Naive thymus-derived CD4-positive, alpha-beta T cell (primary cell): ENCODE measurements at regions of chr15 and their contacts with region 1.

Region 1: DNA sequence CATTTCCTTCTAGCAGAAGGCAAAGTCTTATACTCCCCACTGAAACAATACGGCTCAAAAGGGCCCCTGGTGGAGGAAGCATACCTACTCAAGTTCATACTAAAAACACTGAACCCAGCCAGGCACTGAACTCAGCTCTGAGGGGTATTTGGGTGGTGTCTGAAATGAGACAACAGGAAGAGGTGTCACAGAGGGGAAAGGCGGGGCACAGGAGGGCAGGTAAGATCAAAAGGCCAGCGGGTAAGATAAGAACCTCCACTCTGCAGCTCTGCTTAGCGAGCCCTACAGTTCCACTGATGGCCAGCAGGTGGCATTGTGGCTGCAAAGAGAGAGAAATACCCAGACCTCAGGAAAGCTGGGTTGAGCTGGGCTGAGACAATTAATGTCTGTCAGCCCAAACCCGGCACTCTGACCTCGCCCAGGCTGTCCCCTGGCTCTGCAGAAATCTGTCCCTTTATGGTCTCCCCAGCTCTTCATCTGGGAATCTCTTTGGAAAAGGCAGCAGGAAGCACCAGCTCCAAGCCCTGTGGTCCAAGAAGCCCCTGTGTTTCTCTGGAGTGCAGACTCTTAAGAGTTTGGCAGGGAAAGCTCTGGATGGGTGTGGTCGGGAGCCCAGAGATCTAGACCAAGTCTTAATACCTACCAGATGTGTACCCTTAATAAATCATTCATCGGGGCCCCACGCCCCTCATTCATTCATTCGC is 8.4 kb downstream of the MFGE8 start:
- DNase-seq: peak; percentile 79 to 99 (median 98)
- ATAC-seq: peak; percentile 99
- H3K4me3 ChIP-seq: no peak overlapping the region
- H3K4me3 Mint-ChIP-seq: peak overlapping the region; percentile 16 to 78 (median 54)
- H3K27ac ChIP-seq: peak overlapping the region; percentile 70
- H3K27ac Mint-ChIP-seq: peak overlapping the region; percentile 76 to 98 (median 94)
- H3K4me1 ChIP-seq: peaks cover 19 to 37% of the 10 kb centered on the region in 2 donors
- H3K4me1 Mint-ChIP-seq: peaks cover 23 to 65% (median 52%) of the 10 kb centered on the region in 7 donors
- H3K27me3 ChIP-seq: no peaks in the 10 kb centered on the region
- H3K27me3 Mint-ChIP-seq: no peaks in the 10 kb centered on the region

Region 2: DNA sequence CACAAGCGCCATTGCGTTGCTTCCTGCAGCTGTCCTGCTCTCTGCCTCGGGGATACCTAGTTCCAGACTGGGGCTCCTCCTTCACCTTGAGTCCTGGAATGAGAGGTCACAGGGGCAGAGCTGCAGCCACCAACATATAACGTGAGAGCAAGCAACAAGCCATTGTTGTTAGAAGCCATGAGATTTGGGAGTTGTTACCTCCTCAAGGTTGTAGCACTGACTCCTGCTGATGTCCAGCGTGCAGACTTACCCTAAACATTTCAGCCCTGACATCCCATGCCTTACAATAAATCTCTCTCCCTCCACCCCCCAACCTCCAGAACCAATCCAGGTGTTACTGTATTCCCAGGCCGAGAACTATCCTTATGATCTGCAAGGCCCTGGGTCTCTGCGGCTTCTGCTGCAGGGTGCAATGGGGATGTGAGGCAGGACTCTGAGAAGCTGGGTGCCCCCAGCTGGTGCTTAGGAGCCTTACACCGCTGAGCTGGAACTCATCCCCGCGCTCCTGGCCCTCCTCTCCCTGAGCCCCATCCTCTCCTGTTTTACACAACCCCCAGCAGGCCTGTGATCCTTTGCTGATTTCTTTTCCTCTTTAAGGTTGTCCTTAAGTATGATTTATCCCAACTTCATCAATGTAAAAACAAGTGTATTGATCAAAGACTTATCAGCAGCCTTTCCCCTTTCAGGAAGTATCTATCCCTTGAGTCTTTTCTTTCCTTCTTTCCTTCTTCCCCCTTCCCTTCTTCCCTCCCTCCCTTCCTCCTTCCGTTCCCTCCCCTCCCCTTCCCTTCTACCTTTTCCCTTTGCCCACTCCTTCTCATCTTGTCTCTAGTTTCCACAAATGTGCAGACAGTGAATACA is 99.3 kb after region 1 on chr15:
- CTCF ChIA-PET with region 1: interaction called, 16 read pairs
- POLR2A ChIA-PET with region 1: interaction called, 4 read pairs
- intact Hi-C with region 1: no loop called
- DNase-seq: peak in 2 of 9 donors; percentile 5
- ATAC-seq: no peak
- H3K4me3 ChIP-seq: no peak overlapping the region
- H3K4me3 Mint-ChIP-seq: no peak overlapping the region
- H3K27ac ChIP-seq: no peak overlapping the region
- H3K27ac Mint-ChIP-seq: peak overlapping the region in 2 of 9 donors; percentile 12 to 28
- H3K4me1 ChIP-seq: no peaks in the 10 kb centered on the region
- H3K4me1 Mint-ChIP-seq: peaks cover 0 to 6% (median 4%) of the 10 kb centered on the region in 7 donors
- H3K27me3 ChIP-seq: no peaks in the 10 kb centered on the region
- H3K27me3 Mint-ChIP-seq: peaks cover 0 to 10% (median 5%) of the 10 kb centered on the region in 5 donors

Region 3: GRCh38 chr15:89017370-89018066 is 112.7 kb after region 1 on chr15:
- CTCF ChIA-PET with region 1: interaction called, 37 read pairs
- POLR2A ChIA-PET with region 1: interaction called, 8 read pairs
- intact Hi-C with region 1: loop called (anchors 1 kb)
- DNase-seq: peak; percentile 73 to 88 (median 82)
- ATAC-seq: peak; percentile 96
- H3K4me3 ChIP-seq: peak overlapping the region; percentile 31
- H3K4me3 Mint-ChIP-seq: peak overlapping the region; percentile 56 to 83 (median 70)
- H3K27ac ChIP-seq: no peak overlapping the region
- H3K27ac Mint-ChIP-seq: peak overlapping the region; percentile 26 to 91 (median 78)
- H3K4me1 ChIP-seq: peaks cover 10 to 13% of the 10 kb centered on the region in 2 donors
- H3K4me1 Mint-ChIP-seq: peaks cover under 1 to 28% (median 13%) of the 10 kb centered on the region in 7 donors
- H3K27me3 ChIP-seq: no peaks in the 10 kb centered on the region
- H3K27me3 Mint-ChIP-seq: peaks cover 0 to 45% (median 0%) of the 10 kb centered on the region in 5 donors

Region 4: GRCh38 chr15:89496155-89497098 is 591.7 kb after region 1 on chr15 and contains the start of gene RHCG:
- CTCF ChIA-PET with region 1: no interaction called
- POLR2A ChIA-PET with region 1: no interaction called
- intact Hi-C with region 1: no loop called
- DNase-seq: no peak
- ATAC-seq: no peak
- H3K4me3 ChIP-seq: no peak within 1 kb of the TSS
- H3K4me3 Mint-ChIP-seq: peak within 1 kb of the TSS; percentile 14 to 71 (median 44)
- H3K27ac ChIP-seq: no peak within 1 kb of the TSS
- H3K27ac Mint-ChIP-seq: no peak within 1 kb of the TSS
- H3K4me1 ChIP-seq: no peaks in the 10 kb centered on the region
- H3K4me1 Mint-ChIP-seq: peaks cover 0 to 9% (median 3%) of the 10 kb centered on the region in 7 donors
- H3K27me3 ChIP-seq: peaks cover 0 to 7% of the 10 kb centered on the region in 2 donors
- H3K27me3 Mint-ChIP-seq: peaks cover 45 to 69% (median 57%) of the 10 kb centered on the region in 5 donors
- total RNA-seq, gene RHCG: not detected